ENCODE measurements at regions of chr12 and their contacts with region 1.

Region 1: GRCh38 chr12:3076730-3077571 is at the start of gene TSPAN9:
- DNase-seq: peak; percentile 60 to 82
- H3K4me3 ChIP-seq: peak within 1 kb of the TSS; percentile 87 to 91 (median 89)
- H3K27ac ChIP-seq: peak within 1 kb of the TSS; percentile 92 to 96
- H3K4me1 ChIP-seq: no peaks in the 10 kb centered on the region
- H3K27me3 ChIP-seq: no peaks in the 10 kb centered on the region
- CTCF ChIP-seq: no peak
- POLR2A ChIP-seq: peak; percentile 15
- total RNA-seq, gene TSPAN9: 16.8 to 44.9 (median 36.9) TPM

Region 2: DNA sequence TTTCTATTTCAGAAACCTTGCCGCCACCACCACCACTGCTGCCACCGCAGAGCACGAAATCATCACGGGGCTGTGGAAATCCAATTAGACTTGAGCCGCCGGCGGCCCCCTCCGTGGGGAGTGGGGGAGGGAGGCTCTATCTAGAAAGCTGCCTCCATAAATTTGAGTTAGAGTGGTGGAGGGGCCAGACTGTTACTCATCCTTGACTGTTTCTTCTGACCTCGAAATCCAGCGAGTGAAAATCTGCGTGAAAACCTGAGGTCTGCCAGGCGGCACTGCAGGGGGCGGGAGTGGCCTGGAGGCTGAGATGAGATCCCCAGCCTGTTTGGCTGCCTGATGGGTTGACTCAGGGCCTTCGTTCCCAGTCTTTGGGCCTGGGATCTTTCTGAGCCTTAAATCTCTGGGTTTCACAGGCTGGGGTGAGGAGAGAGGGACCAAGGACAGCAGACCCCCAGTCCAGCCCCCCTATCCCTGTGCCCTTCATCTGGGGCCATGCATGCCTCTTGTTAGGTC is 30.2 kb after region 1 on chr12:
- intact Hi-C with region 1: no loop called
- DNase-seq: no peak
- H3K4me3 ChIP-seq: no peak overlapping the region
- H3K27ac ChIP-seq: peak overlapping the region in 1 of 2 donors; percentile 12
- H3K4me1 ChIP-seq: peaks cover 0 to 4% of the 10 kb centered on the region in 2 donors
- H3K27me3 ChIP-seq: no peaks in the 10 kb centered on the region
- CTCF ChIP-seq: no peak
- POLR2A ChIP-seq: no peak

Region 3: GRCh38 chr12:3275171-3276041 is 198.5 kb after region 1 on chr12:
- intact Hi-C with region 1: loop called (anchors 2 kb)
- DNase-seq: peak; percentile 51 to 80
- H3K4me3 ChIP-seq: no peak overlapping the region
- H3K27ac ChIP-seq: no peak overlapping the region
- H3K4me1 ChIP-seq: no peaks in the 10 kb centered on the region
- H3K27me3 ChIP-seq: no peaks in the 10 kb centered on the region
- CTCF ChIP-seq: peak; percentile 80 to 94 (median 87)
- POLR2A ChIP-seq: no peak